GM10248 (cell line): ENCODE measurements at regions of chr20 and their contacts with region 1.

Region 1: DNA sequence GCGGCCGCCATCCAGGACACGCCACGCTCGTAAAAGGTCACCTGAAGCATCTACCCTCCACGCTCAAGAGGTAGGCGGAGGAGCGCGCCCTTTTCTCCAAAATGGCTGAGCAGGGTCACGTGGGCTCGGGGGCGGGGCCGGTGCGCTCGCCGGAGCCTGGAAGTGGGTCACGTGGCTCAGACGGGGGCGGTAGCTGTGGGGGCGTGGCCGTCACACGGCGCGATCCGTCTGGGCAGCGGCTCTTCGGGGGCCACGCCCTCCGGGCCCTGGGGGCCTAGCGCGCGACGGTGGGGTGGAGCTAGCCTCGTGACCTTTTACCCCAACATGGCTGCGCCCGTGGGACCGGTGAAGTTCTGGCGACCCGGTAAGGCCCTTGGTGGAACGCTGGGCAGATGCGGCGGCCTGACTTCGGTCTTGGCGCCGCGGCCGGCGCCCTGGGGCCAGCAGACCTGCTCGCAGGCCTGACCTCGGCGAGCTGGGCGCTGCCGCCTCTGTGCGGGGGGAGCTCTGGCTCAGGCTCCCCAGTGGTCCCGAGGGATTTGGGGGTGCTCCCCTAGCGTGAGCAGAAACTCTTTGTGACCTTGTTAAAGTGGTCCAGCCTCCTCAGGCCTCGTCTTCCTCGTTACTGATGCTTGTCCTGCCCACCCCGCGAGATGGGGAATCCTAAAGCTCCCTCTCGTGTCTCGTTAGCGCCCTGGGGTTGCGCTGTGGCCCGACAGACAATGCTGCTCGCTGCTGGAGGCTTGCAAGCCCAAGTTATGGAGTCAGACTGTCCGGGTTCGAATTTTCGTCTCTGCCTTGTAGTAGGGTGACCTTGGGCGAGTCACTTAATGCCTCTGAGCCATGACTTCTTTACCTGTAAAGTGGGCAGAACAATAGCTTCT is at the start of gene DHX35:
- DNase-seq: peak; percentile 100
- CTCF ChIP-seq: peak; percentile 60

Region 2: DNA sequence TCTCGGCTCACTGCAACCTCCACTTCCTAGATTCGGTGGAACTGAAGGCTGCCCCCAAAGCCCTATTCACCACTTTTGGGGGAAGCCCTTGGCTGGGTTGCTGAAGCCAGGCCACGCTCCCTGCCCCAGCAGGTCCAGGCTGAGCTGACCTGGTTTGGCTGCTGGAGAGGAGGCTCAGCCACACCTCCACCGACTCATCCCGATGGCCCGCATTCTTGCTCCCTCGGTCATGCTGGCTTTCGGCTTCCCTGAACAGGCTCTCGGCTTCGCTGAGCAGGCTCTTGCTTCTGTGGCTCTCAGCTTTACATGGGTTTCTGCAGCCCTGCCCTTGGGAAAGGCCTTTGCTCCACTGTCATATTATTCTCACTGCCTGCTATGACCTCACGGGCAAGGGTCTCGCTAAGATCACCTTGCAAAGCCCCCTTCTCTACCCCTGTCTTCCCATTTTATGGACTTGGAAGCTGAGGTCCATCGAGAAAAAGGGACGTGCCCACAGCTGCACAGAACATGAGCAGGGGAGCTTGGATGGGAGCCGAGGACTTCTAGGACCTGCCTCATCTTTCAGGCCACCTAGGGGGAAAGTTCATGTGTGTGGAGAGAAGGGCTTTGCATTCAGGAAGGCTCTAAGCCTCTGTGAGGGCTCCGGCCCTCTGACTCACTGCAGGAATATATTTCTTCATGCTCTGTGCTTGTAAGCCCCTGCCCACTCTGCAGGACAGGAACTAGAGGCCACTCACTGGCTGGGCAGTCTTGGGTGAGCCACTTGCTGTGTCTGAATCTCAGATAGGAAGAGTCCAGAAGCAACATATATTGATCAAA is 345.1 kb before region 1 on chr20:
- CTCF ChIA-PET with region 1: no interaction called
- POLR2A ChIA-PET with region 1: no interaction called
- DNase-seq: no peak
- CTCF ChIP-seq: no peak

Region 3: DNA sequence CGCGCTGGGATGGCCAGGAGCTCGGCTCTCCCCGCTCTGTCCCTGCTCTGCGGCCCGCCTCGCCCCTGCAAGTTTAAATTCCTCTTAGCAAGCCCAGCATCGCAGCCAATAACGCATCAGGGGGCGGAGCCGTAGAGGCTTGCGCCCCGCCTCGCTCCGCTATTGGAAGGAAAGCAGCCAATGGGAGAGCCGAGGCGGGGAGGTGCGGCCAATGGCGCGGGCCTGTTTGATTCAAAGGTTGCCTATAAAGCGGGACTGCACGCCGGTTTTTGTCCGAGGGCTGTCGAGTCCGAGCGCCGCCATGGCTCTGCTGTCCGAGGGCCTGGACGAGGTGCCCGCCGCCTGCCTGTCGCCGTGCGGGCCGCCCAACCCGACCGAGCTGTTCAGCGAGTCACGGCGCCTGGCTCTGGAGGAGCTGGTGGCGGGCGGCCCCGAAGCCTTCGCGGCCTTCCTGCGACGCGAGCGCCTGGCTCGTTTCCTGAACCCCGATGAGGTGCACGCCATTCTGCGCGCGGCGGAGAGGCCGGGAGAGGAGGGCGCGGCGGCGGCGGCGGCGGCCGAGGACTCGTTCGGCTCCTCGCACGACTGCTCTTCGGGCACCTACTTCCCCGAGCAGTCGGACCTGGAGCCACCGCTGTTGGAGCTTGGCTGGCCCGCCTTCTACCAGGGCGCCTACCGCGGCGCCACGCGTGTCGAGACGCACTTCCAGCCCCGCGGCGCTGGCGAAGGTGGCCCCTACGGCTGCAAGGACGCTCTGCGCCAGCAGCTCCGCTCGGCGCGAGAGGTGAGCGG is 35.9 kb before region 1 on chr20 and contains the start of gene FAM83D:
- CTCF ChIA-PET with region 1: interaction called, 17 read pairs
- POLR2A ChIA-PET with region 1: interaction called, 8 read pairs
- DNase-seq: peak; percentile 100
- CTCF ChIP-seq: no peak

Region 4: DNA sequence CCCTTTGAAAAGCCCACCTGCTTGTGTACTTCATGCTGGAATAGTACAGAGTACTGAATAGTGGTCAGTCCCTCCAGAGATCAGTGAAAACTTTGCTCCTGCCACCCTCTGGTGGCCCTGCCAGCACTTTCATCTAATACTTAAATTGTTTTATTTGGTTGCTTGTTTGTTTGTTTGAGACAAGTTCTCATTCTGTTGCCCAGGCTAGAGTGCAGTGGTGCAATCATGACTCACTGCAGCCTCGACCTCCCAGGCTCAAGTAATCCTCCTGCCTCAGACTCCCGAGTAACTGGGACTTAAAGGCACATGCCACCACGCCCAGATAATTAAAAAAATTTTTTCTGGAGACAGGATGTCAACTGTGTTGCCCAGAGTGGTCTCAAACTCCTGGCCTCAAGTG is 27.0 kb before region 1 on chr20:
- CTCF ChIA-PET with region 1: interaction called, 13 read pairs
- POLR2A ChIA-PET with region 1: no interaction called
- DNase-seq: no peak
- CTCF ChIP-seq: no peak

Region 5: GRCh38 chr20:38973645-38974044 is 11.4 kb after region 1 on chr20:
- CTCF ChIA-PET with region 1: interaction called, 19 read pairs
- POLR2A ChIA-PET with region 1: interaction called, 5 read pairs
- DNase-seq: no peak
- CTCF ChIP-seq: no peak

Region 6: GRCh38 chr20:38985603-38986170 is 23.4 kb after region 1 on chr20:
- CTCF ChIA-PET with region 1: interaction called, 19 read pairs
- POLR2A ChIA-PET with region 1: no interaction called
- DNase-seq: peak; percentile 19
- CTCF ChIP-seq: no peak

Region 7: GRCh38 chr20:38997622-38998021 is 35.3 kb after region 1 on chr20:
- CTCF ChIA-PET with region 1: interaction called, 38 read pairs
- POLR2A ChIA-PET with region 1: interaction called, 6 read pairs
- DNase-seq: peak; percentile 84
- CTCF ChIP-seq: peak; percentile 59

Region 8: DNA sequence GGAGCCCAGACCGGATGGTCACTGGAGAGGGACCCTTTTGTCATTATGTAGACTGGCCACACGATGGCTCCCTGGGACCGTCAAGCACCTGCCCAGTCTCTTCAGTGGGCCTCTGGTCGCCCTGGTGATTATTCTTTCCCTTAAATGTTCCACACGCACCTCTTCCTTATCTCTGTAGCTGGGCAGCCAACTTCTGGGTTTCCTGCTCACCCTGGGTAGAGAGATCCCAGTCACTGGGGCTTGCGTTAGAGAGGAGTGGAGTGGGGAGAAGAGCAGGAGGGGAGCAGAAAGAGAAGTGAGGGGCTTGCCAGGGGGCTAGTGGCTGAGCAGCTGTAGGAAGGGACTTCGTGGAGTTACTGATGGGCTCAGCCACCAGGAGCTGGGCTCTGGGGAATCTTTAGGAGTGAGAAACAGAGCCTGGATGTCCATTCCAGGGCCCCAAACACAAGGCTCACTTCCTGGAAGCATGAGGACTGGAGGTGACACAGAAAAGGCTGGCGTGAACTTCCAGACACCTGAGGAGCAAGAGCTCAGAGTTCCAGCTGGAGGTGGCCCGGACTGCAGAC is 150.0 kb after region 1 on chr20:
- CTCF ChIA-PET with region 1: no interaction called
- POLR2A ChIA-PET with region 1: no interaction called
- DNase-seq: peak; percentile 77
- CTCF ChIP-seq: peak; percentile 57

Region 9: GRCh38 chr20:39468703-39469102 is 506.4 kb after region 1 on chr20:
- CTCF ChIA-PET with region 1: no interaction called
- POLR2A ChIA-PET with region 1: no interaction called
- DNase-seq: no peak
- CTCF ChIP-seq: no peak

Region 10: DNA sequence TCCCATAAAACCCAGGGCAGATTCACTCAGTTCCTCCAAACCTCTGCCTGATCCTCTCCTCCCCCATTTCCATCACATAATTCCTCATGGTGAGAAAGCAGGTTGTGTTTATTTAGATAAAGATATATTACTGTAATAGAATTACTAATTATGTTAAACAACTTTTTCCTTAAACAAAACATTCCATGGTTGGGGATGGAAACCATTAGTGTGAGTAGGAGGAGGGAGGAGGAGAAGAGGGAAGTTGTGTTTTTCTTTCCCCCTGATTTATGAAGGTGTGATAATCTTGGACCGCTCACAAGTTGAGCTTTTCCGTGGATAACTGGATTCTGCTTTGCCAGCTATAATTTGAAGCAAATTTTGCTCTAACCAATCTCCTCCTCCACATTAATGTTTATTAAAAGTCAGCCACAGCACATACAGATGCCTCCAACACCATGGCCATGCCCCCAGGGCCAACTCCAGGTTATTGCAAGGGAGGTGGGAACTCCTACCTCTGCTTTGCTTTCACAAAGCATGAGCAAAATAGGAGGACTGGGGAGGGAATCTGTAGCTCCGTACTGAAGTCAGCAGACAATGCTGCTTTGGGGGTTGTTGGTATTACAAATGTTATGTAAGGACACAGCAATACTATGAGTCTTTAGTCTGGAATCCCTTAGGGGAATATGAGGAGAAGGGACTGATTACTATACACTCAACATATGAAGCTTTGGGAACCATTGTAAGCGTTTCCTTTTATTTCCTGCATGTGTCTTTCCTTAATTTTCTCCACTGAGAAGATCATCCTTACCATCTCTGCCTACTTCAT is 541.8 kb after region 1 on chr20:
- CTCF ChIA-PET with region 1: no interaction called
- POLR2A ChIA-PET with region 1: no interaction called
- DNase-seq: no peak
- CTCF ChIP-seq: no peak